WTC11 (cell line): ENCODE measurements at regions of chr5 and their contacts with region 1.

Region 1: GRCh38 chr5:157303667-157304327 is 37.9 kb downstream of the CYFIP2 start:
- DNase-seq: peak; percentile 85
- ATAC-seq: peak; percentile 99
- H3K4me3 Mint-ChIP-seq: no peak overlapping the region
- H3K27ac Mint-ChIP-seq: no peak overlapping the region
- H3K4me1 Mint-ChIP-seq: no peaks in the 10 kb centered on the region
- H3K27me3 Mint-ChIP-seq: no peaks in the 10 kb centered on the region
- CTCF ChIP-seq: peak; percentile 65

Region 2: GRCh38 chr5:157142317-157143126 is 161.3 kb before region 1 on chr5 and contains the start of gene MED7:
- CTCF ChIA-PET with region 1: interaction called, 13 read pairs
- POLR2A ChIA-PET with region 1: no interaction called
- DNase-seq: peak; percentile 91
- ATAC-seq: peak; percentile 100
- H3K4me3 Mint-ChIP-seq: peak within 1 kb of the TSS; percentile 92
- H3K27ac Mint-ChIP-seq: peak within 1 kb of the TSS; percentile 96
- H3K4me1 Mint-ChIP-seq: peaks cover 5% of the 10 kb centered on the region; the same call in 1 of the 2 replicates
- H3K27me3 Mint-ChIP-seq: no peaks in the 10 kb centered on the region; the same call in 1 of the 2 replicates
- CTCF ChIP-seq: no peak
- total RNA-seq, gene MED7: 11.1 to 11.4 TPM (median 11.2 TPM) in 3 replicates

Region 3: GRCh38 chr5:157265714-157266285 is 38.0 kb before region 1 on chr5 and contains the start of gene CYFIP2:
- CTCF ChIA-PET with region 1: interaction called, 16 read pairs
- POLR2A ChIA-PET with region 1: no interaction called
- DNase-seq: peak; percentile 76
- ATAC-seq: peak; percentile 88
- H3K4me3 Mint-ChIP-seq: peak within 1 kb of the TSS; percentile 90
- H3K27ac Mint-ChIP-seq: peak within 1 kb of the TSS; percentile 80
- H3K4me1 Mint-ChIP-seq: peaks cover 44% of the 10 kb centered on the region
- H3K27me3 Mint-ChIP-seq: peaks cover 6% of the 10 kb centered on the region; the same call in 1 of the 2 replicates
- CTCF ChIP-seq: no peak
- total RNA-seq, gene CYFIP2: 95.3 to 102 TPM (median 101 TPM) in 3 replicates

Region 4: DNA sequence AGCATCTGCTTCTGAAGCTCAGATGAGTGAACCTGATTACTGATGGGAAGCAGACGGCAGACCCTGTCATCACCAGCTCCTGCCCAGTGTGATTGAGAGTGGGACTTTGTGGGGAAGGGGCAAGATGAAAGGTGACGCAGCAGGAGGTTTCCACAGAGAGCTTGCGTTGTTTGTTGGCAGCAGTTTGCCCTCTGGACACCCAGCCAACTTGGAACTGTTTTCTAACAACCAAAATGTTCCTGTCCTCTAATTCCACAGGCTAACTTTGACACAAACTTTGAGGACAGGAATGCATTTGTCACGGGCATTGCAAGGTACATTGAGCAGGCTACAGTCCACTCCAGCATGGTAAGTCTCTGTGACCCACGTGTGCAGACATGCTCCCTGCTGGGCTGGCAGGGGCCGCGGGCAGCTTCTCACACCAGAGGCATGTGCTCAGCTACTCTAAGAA is 17.0 kb before region 1 on chr5:
- CTCF ChIA-PET with region 1: interaction called, 21 read pairs
- POLR2A ChIA-PET with region 1: no interaction called
- DNase-seq: no peak
- ATAC-seq: no peak
- H3K4me3 Mint-ChIP-seq: no peak overlapping the region
- H3K27ac Mint-ChIP-seq: no peak overlapping the region
- H3K4me1 Mint-ChIP-seq: peaks cover 4% of the 10 kb centered on the region; the same call in 1 of the 2 replicates
- H3K27me3 Mint-ChIP-seq: no peaks in the 10 kb centered on the region
- CTCF ChIP-seq: no peak

Region 5: GRCh38 chr5:157354800-157355199 is 51.0 kb after region 1 on chr5:
- CTCF ChIA-PET with region 1: interaction called, 12 read pairs
- POLR2A ChIA-PET with region 1: no interaction called
- DNase-seq: peak; percentile 42
- ATAC-seq: peak; percentile 99
- H3K4me3 Mint-ChIP-seq: no peak overlapping the region
- H3K27ac Mint-ChIP-seq: no peak overlapping the region
- H3K4me1 Mint-ChIP-seq: peaks cover 2% of the 10 kb centered on the region; the same call in 1 of the 2 replicates
- H3K27me3 Mint-ChIP-seq: no peaks in the 10 kb centered on the region
- CTCF ChIP-seq: peak; percentile 53